GM13976 (cell line): ENCODE measurements at regions of chr1 and their contacts with region 1.

Region 1: GRCh38 chr1:23496490-23497181 is 12.7 kb upstream of the ASAP3 start:
- DNase-seq: no peak
- CTCF ChIP-seq: no peak

Region 2: GRCh38 chr1:23539698-23540266 is 43.1 kb after region 1 on chr1:
- in situ Hi-C with region 1: loop called (anchors 5 kb)
- DNase-seq: peak; percentile 93
- CTCF ChIP-seq: peak; percentile 87

Region 3: GRCh38 chr1:23809751-23810171 is 313.1 kb after region 1 on chr1:
- in situ Hi-C with region 1: no loop called
- DNase-seq: peak; percentile 87
- CTCF ChIP-seq: peak; percentile 94